ENCODE measurements at regions of chr13 and their contacts with region 1.

Region 1: GRCh38 chr13:44770951-44771350 is 194.8 kb upstream of the TSC22D1 start:
- DNase-seq: no peak
- H3K4me3 ChIP-seq: no peak overlapping the region
- H3K27ac ChIP-seq: no peak overlapping the region
- H3K4me1 ChIP-seq: no peaks in the 10 kb centered on the region
- H3K27me3 ChIP-seq: no peaks in the 10 kb centered on the region
- CTCF ChIP-seq: no peak

Region 2: DNA sequence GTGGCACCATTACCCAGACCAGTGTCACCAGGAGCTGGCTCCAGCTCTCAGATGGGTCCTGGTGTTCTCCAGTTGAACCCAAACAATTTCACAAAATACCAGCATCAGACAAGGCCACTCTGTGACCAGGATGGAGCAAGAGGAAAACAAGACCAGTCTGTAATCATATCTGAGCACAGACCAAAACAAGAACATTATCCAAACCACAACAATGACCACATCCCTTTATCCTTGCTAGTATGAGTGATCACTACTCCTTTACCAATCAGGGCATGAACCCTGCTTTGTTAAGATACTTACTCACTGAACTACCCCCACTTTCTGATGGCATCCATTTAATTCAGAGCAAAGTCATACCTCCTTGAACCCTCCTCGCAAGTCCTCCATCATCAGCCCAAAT is 72.5 kb after region 1 on chr13:
- intact Hi-C with region 1: loop called (anchors 10 kb)
- DNase-seq: no peak
- H3K4me3 ChIP-seq: no peak overlapping the region
- H3K27ac ChIP-seq: no peak overlapping the region
- H3K4me1 ChIP-seq: no peaks in the 10 kb centered on the region
- H3K27me3 ChIP-seq: no peaks in the 10 kb centered on the region
- CTCF ChIP-seq: no peak

Region 3: DNA sequence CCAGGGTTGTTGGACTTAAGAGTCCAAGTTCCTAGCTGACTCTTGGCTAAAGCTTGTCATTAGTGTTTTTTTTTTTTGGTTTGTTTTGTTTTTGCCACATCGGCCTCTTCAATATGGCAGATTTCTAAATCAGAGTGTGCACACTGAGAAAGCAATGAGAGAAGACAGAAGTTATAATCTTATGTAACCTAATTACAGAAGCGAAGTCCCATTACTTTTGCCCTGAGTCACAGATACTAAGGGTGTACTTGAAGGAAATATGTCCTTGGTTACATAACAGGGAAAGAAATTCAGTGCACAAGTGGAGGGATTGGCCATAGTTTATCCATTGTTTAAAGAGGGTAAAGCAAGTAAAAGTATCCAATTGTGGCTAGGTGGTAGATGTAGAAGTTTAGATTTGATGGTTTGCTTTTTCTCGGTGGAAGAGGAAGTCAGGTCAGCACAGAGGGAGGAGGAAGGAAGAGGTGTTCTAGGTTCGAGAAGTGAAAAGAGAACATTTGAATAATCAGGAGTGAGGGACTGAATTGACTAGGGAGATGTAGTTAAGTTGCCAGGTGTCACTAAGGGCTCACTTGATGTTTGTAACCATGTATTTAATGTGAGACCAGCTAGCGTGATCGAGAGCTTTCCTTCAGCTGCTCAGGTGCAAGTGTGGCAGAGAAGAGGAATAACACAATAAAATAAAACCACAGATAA is 361.6 kb after region 1 on chr13:
- intact Hi-C with region 1: no loop called
- DNase-seq: no peak
- H3K4me3 ChIP-seq: no peak overlapping the region
- H3K27ac ChIP-seq: no peak overlapping the region
- H3K4me1 ChIP-seq: no peaks in the 10 kb centered on the region
- H3K27me3 ChIP-seq: no peaks in the 10 kb centered on the region
- CTCF ChIP-seq: no peak

Measured in colonic mucosa (tissue), 4 donors.